Colonic mucosa (tissue), 4 donors: ENCODE measurements at regions of chr3 and their contacts with region 1.

Region 1: DNA sequence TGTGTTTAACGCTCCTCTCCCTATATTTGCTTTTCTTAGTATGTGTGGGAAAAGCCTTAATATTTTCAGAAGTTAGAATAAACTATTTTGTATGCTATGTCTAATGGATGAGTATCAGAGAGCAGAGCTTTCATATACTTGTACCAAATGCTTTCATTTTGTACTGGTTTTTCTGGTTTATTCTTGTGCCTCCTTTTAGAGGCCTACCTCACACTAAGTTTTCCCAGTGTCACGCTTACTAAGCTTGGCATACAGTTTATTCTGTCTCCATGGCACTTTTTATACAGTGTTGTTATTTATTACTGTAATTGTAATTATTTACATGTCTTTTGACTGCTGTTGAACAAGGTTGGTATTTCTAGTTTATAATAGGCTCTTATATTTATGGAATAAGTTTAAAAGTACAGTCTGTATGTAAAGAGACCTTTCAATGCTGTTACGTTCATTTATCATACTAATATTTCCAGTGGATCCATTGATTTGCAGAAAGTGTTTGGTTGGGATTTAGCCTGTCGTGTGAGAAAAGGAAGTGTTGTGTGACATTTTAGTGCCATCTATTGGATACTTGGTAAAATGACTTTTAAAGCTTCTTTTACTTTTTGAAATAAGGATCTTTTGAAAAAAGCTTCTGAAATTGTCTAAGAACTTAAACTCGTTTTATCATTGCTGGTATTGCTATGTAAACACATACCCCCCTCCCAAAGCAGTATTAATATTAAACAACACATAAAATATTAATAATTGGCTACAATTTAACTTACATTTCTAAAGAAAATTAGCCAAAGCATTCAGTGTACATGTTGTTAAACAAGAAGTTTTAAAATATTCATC is 5.2 kb upstream of the EBLN2 start:
- DNase-seq: no peak
- H3K4me3 ChIP-seq: no peak overlapping the region
- H3K27ac ChIP-seq: no peak overlapping the region
- H3K4me1 ChIP-seq: peaks cover 8% of the 10 kb centered on the region
- H3K27me3 ChIP-seq: no peaks in the 10 kb centered on the region
- CTCF ChIP-seq: peak; percentile 35

Region 2: GRCh38 chr3:72847751-72848702 is 208.2 kb before region 1 on chr3 and contains the start of gene SHQ1:
- intact Hi-C with region 1: loop called (anchors 10 kb)
- DNase-seq: peak; percentile 99
- H3K4me3 ChIP-seq: peak within 1 kb of the TSS; percentile 74
- H3K27ac ChIP-seq: peak within 1 kb of the TSS; percentile 11
- H3K4me1 ChIP-seq: peaks cover 7% of the 10 kb centered on the region
- H3K27me3 ChIP-seq: no peaks in the 10 kb centered on the region
- CTCF ChIP-seq: no peak
- total RNA-seq, gene SHQ1: 10.9 to 25.0 TPM

Region 3: GRCh38 chr3:72938471-72939265 is 117.6 kb before region 1 on chr3:
- intact Hi-C with region 1: loop called (anchors 5 kb)
- DNase-seq: peak; percentile 44
- H3K4me3 ChIP-seq: no peak overlapping the region
- H3K27ac ChIP-seq: no peak overlapping the region
- H3K4me1 ChIP-seq: no peaks in the 10 kb centered on the region
- H3K27me3 ChIP-seq: no peaks in the 10 kb centered on the region
- CTCF ChIP-seq: peak; percentile 53